ENCODE measurements at regions of chr20 and their contacts with region 1.

Region 1: DNA sequence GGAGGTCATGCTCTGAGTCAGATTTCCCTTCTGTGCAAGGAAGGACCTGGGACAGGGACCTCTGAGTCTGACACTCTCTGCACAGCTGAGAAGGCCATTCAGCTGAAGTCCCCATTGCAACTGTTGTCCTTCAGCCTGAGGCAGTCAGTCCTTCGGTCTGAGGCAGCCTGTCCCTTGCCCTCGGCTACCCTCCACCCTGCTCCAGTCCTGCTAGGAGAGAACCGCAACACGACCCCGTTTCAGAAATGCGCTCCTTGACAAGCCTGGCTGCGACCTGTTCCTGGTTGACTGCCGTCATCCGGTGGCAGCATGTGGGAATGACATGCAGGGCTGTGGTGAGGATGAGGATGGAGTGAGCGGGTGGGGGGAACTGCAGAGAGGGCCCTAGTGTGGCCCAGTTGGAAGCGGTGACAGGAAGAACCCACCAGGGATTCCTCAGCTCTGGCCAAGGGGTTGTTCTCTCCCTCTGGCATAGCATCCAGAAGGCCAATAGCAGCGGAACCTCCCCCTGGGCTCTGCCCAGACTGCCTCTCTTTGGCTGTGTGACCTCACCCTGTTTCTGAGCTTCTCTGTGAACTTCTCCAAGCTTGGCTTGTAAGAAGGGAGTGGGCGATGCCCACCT is 40.3 kb upstream of the ANGPT4 start:
- DNase-seq: peak; percentile 87
- H3K4me3 ChIP-seq: peak overlapping the region in 1 of 2 experiments; percentile 13; a peak in 1 of 4 replicates
- H3K27ac ChIP-seq: no peak overlapping the region
- H3K4me1 ChIP-seq: peaks cover 0 to 3% of the 10 kb centered on the region in 2 experiments; a peak in 1 of 4 replicates
- H3K27me3 ChIP-seq: no peaks in the 10 kb centered on the region; the same call in 1 of the 2 replicates
- CTCF ChIP-seq: peak; percentile 99
- EP300 ChIP-seq: no peak
- RAD21 ChIP-seq: peak; percentile 98

Region 2: DNA sequence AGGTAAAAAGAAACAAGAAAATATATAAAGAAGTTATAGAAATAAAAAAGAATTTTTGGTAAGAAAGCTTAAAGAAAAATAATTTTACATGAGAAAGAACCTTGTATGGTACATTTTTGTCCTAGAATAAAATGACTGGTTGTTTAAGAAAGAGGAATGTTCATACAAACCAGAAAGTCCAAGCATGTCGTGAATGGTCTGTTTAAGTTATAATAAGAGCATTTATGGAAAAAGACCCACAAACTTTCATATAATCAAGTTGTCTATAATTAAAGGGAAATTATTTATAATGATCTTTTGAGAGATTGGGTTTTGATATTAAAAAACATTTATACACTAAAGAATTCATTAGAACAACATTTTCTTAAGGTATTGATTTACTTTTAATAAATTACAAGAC is 150.7 kb before region 1 on chr20:
- CTCF ChIA-PET with region 1: interaction called, 26 read pairs
- POLR2A ChIA-PET with region 1: no interaction called
- DNase-seq: no peak
- H3K4me3 ChIP-seq: no peak overlapping the region
- H3K27ac ChIP-seq: no peak overlapping the region
- H3K4me1 ChIP-seq: no peaks in the 10 kb centered on the region
- H3K27me3 ChIP-seq: no peaks in the 10 kb centered on the region
- CTCF ChIP-seq: no peak
- EP300 ChIP-seq: no peak
- RAD21 ChIP-seq: no peak

Region 3: GRCh38 chr20:833450-834150 is 122.8 kb before region 1 on chr20 and contains the start of gene FAM110A:
- CTCF ChIA-PET with region 1: interaction called, 59 read pairs
- POLR2A ChIA-PET with region 1: no interaction called
- DNase-seq: peak; percentile 95
- H3K4me3 ChIP-seq: peak within 1 kb of the TSS; percentile 67 to 85
- H3K27ac ChIP-seq: peak within 1 kb of the TSS; percentile 88 to 92
- H3K4me1 ChIP-seq: peaks cover 6 to 12% of the 10 kb centered on the region in 2 experiments; a peak in 2 of 4 replicates
- H3K27me3 ChIP-seq: no peaks in the 10 kb centered on the region
- CTCF ChIP-seq: no peak
- EP300 ChIP-seq: no peak
- RAD21 ChIP-seq: no peak
- polyA plus RNA-seq, gene FAM110A: 2.5 and 3.8 TPM in 2 replicates

Region 4: DNA sequence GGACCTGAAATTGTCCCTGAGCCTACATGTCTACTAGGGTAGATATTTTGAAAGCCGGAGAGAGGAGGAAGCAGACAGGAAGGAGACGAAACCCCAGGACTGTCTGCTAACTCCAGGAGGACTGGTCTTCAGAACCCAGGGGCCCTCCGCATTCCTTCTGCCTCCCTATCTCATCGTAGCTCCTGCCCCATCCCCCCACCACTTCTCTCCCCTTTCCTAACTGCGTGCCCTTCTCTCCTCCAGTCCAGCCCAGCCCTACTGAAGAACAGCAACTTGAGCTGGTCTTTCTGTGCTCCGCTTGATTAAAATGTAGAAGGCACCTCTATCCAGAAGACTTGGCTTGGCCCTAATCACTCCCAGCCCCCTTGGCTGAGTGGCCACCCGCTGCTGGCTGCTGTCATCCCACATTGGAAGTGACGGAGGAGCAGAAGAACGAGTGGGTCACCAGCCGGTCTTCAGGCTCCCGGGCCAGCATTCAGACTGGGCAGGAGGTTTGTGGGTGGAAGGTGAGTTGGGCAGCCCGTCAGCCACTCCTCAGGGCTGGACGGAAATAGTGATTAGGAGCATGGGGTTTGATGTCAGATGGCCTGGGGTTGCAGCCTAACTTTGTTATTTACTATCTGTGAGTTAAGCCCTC is 11.5 kb before region 1 on chr20:
- CTCF ChIA-PET with region 1: interaction called, 40 read pairs
- POLR2A ChIA-PET with region 1: no interaction called
- DNase-seq: no peak
- H3K4me3 ChIP-seq: no peak overlapping the region
- H3K27ac ChIP-seq: no peak overlapping the region
- H3K4me1 ChIP-seq: peaks cover 0 to 4% of the 10 kb centered on the region in 2 experiments; a peak in 1 of 4 replicates
- H3K27me3 ChIP-seq: no peaks in the 10 kb centered on the region; the same call in 1 of the 2 replicates
- CTCF ChIP-seq: no peak
- EP300 ChIP-seq: no peak
- RAD21 ChIP-seq: no peak

Region 5: DNA sequence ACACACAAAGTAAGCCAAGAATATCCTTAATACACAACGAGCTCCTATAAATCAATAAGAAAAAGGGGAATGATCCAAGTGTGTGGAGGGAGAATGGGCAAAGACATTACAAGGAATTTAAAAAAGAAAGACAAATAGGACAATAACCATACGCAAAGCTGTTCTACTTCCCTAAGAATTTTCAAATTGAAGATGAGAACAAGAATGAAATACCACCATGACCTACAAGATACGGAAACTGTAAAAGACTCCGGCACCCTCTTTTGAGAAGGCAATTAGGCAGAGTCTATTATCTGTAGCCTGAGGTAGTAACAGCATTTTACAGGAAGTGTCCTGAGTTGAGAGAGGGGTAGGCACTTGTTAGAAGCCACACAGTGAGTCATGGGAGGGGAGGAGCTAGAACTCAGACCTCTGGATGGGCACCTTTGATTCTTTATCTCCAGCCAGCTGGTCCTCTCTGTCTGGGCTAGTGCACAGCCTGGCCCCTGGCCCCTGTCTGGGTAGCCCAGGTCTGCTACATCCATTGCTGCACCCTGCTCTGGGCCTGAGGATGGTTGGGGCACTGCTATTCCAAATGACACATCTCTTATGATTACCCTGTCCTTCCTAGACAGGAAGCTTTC is 30.4 kb after region 1 on chr20:
- CTCF ChIA-PET with region 1: interaction called, 10 read pairs
- POLR2A ChIA-PET with region 1: no interaction called
- DNase-seq: no peak
- H3K4me3 ChIP-seq: no peak overlapping the region
- H3K27ac ChIP-seq: no peak overlapping the region
- H3K4me1 ChIP-seq: peaks cover 0 to 2% of the 10 kb centered on the region in 2 experiments; a peak in 1 of 4 replicates
- H3K27me3 ChIP-seq: peaks cover 5% of the 10 kb centered on the region; the same call in 1 of the 2 replicates
- CTCF ChIP-seq: no peak
- EP300 ChIP-seq: no peak
- RAD21 ChIP-seq: no peak

Region 6: GRCh38 chr20:1094751-1095150 is 138.3 kb after region 1 on chr20:
- CTCF ChIA-PET with region 1: interaction called, 12 read pairs
- POLR2A ChIA-PET with region 1: no interaction called
- DNase-seq: peak; percentile 42
- H3K4me3 ChIP-seq: no peak overlapping the region
- H3K27ac ChIP-seq: peak overlapping the region in 1 of 2 experiments; percentile 40; a peak in 2 of 4 replicates
- H3K4me1 ChIP-seq: peaks cover 0 to 10% of the 10 kb centered on the region in 2 experiments; a peak in 2 of 4 replicates
- H3K27me3 ChIP-seq: no peaks in the 10 kb centered on the region
- CTCF ChIP-seq: no peak
- EP300 ChIP-seq: no peak; a peak in 1 of 4 replicates
- RAD21 ChIP-seq: no peak

Measured in SK-N-SH (cell line).